ENCODE measurements at regions of chr11 and their contacts with region 1.

Region 1: GRCh38 chr11:49230511-49230910 is 22.1 kb upstream of the FOLH1 start:
- DNase-seq: peak in 1 of 2 donors; percentile 5
- ATAC-seq: peak in 2 of 8 donors; percentile 17 to 48
- H3K4me3 ChIP-seq: no peak overlapping the region
- H3K27ac ChIP-seq: no peak overlapping the region
- H3K4me1 ChIP-seq: no peaks in the 10 kb centered on the region
- H3K27me3 ChIP-seq: no peaks in the 10 kb centered on the region
- CTCF ChIP-seq: no peak

Region 2: GRCh38 chr11:49377978-49378377 is 147.5 kb after region 1 on chr11:
- intact Hi-C with region 1: loop called in 2 of 10 experiments (anchors 5 to 10 kb)
- DNase-seq: no peak
- ATAC-seq: no peak
- H3K4me3 ChIP-seq: no peak overlapping the region
- H3K27ac ChIP-seq: no peak overlapping the region
- H3K4me1 ChIP-seq: peaks cover 0 to 9% (median 0%) of the 10 kb centered on the region in 9 donors
- H3K27me3 ChIP-seq: no peaks in the 10 kb centered on the region
- CTCF ChIP-seq: no peak

Region 3: DNA sequence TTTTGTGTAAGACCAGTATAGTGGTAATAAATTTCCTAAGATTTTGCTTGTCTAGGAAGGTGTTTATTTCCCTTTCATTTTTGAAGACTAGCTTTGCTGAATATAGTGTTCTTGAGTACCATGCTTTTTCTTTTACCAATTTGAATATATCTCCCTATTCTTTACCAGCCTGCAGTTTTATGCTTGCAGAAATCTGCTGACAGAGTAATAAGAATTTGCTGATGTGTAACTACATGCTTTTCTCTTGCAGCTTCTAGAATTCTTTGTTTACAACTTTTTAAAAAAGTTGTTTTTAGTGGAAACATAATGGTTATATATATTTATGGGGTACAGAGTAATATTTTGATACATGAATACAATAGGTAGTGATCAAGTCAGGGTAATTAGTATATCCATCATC is 302.7 kb after region 1 on chr11:
- intact Hi-C with region 1: loop called in 5 of 10 experiments (anchors 5 to 10 kb)
- DNase-seq: no peak
- ATAC-seq: no peak
- H3K4me3 ChIP-seq: no peak overlapping the region
- H3K27ac ChIP-seq: no peak overlapping the region
- H3K4me1 ChIP-seq: no peaks in the 10 kb centered on the region
- H3K27me3 ChIP-seq: no peaks in the 10 kb centered on the region
- CTCF ChIP-seq: no peak